AG04449 (cell line): ENCODE measurements at regions of chr3 and their contacts with region 1.

Region 1: GRCh38 chr3:17213102-17213501 is 328.3 kb downstream of the PLCL2 start:
- DNase-seq: no peak
- H3K4me3 ChIP-seq: no peak overlapping the region
- CTCF ChIP-seq: no peak

Region 2: DNA sequence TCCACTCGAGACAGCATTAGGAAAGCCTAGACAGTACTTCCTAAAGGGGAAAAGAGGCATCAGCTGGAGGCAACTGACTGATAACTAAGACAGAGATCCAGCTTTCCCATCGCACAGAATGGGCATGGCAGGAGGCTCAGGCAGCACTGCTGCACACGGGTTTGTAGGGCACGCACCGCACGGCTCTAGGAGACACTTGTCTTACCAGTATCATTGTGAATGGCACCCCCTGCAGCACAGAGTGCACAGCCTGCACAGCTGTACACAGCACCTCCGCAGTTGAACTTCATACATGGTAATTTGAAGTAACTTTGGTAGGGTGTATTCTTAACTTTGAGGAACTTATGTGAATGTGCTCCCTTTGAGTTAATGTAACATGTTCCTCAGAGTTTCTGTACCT is 46.7 kb before region 1 on chr3:
- CTCF ChIA-PET with region 1: no interaction called
- POLR2A ChIA-PET with region 1: no interaction called
- DNase-seq: no peak
- H3K4me3 ChIP-seq: no peak overlapping the region
- CTCF ChIP-seq: no peak

Region 3: GRCh38 chr3:17233398-17233800 is 20.3 kb after region 1 on chr3:
- CTCF ChIA-PET with region 1: interaction called, 10 read pairs
- POLR2A ChIA-PET with region 1: no interaction called
- DNase-seq: no peak
- H3K4me3 ChIP-seq: no peak overlapping the region
- CTCF ChIP-seq: peak; percentile 60